Calu3 (cell line): ENCODE measurements at regions of chr10 and their contacts with region 1.

Region 1: GRCh38 chr10:70758757-70759514 is 26.2 kb downstream of the TBATA start:
- DNase-seq: peak; percentile 79
- H3K4me3 Mint-ChIP-seq: no peak overlapping the region
- H3K27ac Mint-ChIP-seq: no peak overlapping the region
- H3K4me1 Mint-ChIP-seq: no peaks in the 10 kb centered on the region
- H3K27me3 Mint-ChIP-seq: peaks cover 98% of the 10 kb centered on the region
- CTCF ChIP-seq: peak; percentile 76

Region 2: DNA sequence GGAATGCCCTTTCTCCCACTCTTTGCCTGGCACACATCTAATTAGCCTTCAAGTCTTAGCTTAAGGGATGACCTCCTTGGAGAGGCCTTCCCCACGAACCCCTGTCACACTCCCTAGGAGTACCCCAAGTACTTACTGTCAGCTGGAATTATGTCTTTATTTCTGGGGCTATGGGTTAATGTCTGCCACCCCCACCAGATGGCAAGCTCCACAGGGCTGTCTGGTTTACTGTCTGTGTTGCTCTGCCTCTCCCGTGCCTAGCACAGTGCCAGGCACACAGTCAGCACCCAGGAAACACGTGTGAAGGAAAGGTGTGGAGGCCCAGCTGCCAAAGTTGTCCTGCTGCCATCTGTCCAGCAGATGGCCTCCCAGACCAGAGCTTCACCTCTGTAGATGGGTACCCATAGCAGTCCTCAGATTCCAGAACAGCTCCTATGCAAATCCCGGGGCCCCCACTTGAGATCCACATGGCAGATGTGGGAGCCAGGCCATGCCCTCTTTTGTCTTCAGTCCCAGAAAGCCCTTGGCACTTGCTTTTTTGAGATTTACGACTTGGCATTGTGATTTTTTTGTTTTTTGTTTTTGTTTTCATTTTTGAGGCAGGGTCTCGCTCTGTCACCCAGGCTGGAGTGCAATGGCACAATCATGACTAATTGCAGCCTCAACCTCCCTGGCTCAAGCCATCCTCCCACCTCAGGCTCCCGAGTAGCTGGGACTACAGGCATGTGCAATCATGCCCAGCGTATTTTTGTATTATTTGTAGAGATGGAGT is 297.5 kb before region 1 on chr10:
- CTCF ChIA-PET with region 1: no interaction called
- intact Hi-C with region 1: loop called (anchors 2 kb)
- DNase-seq: peak; percentile 68
- H3K4me3 Mint-ChIP-seq: no peak overlapping the region
- H3K27ac Mint-ChIP-seq: no peak overlapping the region
- H3K4me1 Mint-ChIP-seq: no peaks in the 10 kb centered on the region
- H3K27me3 Mint-ChIP-seq: peaks cover 76% of the 10 kb centered on the region
- CTCF ChIP-seq: peak; percentile 96

Region 3: DNA sequence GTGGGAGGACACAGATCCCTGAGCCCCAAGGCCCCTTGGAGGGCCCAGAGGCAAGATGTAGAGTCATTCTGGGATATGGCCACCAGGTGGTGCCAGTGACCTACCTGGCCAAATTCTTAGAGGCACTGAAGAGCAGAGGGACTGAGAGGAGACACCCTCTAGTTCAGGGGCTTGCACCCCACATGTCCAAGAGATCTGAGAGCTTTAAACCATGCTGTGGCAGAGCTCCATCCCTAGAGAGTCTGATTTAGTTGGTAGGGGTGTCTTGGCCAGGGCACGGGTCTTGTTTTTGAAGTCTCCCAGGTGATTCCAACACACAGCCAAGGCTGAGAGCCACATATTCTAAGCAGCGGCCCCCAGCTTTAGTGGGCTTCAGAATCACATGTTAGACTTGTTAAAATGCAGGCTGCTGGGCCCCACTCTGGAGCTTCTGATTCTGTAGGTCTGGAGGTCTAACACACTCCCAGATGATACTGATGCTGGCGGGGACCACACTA is 208.9 kb before region 1 on chr10:
- CTCF ChIA-PET with region 1: interaction called, 7 read pairs
- intact Hi-C with region 1: loop called (anchors 1 kb)
- DNase-seq: peak; percentile 81
- H3K4me3 Mint-ChIP-seq: no peak overlapping the region
- H3K27ac Mint-ChIP-seq: no peak overlapping the region
- H3K4me1 Mint-ChIP-seq: no peaks in the 10 kb centered on the region
- H3K27me3 Mint-ChIP-seq: peaks cover 31% of the 10 kb centered on the region
- CTCF ChIP-seq: peak; percentile 92

Region 4: DNA sequence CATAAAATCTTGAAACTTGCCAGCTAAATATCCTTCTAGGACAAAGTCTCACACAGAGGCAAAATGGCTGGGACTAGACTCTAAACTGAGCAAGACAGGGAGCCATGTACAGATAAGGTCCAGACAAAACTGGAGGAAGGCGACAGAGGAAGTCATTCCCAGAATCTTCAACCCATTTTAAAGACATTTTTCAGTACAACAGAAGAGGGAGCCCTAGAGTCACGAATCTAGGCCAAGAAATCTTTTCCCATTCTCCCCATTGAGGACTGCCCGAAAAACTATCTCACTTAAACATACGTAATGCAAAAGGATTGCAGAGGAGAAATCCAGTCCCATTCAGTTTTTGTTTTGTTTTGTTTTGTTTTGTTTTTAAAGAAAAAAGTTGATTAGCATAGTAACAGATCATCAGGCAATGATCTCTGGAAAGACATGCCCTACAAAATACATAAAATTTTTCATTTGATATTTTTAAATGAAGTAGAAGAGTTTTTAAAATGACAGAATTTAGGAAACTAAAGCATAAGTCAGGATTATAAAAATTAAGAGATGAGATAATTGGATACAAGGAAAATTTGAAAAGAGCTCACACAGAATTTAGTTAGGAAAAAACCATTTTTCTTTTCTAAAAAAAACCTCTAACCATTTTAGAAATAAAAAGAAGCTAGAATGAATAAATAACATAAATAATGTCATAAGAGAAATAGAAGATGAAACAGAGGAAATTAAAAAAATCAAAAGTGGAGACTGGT is 139.5 kb before region 1 on chr10:
- CTCF ChIA-PET with region 1: no interaction called
- intact Hi-C with region 1: loop called (anchors 1 kb)
- DNase-seq: no peak
- H3K4me3 Mint-ChIP-seq: no peak overlapping the region
- H3K27ac Mint-ChIP-seq: no peak overlapping the region
- H3K4me1 Mint-ChIP-seq: no peaks in the 10 kb centered on the region
- H3K27me3 Mint-ChIP-seq: peaks cover 62% of the 10 kb centered on the region
- CTCF ChIP-seq: peak; percentile 39

Region 5: GRCh38 chr10:71124921-71125748 is 366.2 kb after region 1 on chr10:
- CTCF ChIA-PET with region 1: no interaction called
- intact Hi-C with region 1: no loop called
- DNase-seq: no peak
- H3K4me3 Mint-ChIP-seq: no peak overlapping the region
- H3K27ac Mint-ChIP-seq: no peak overlapping the region
- H3K4me1 Mint-ChIP-seq: peaks cover 10% of the 10 kb centered on the region
- H3K27me3 Mint-ChIP-seq: peaks cover 90% of the 10 kb centered on the region
- CTCF ChIP-seq: no peak